Left cardiac atrium (tissue), 4 donors: ENCODE measurements at regions of chr17 and their contacts with region 1.

Region 1: DNA sequence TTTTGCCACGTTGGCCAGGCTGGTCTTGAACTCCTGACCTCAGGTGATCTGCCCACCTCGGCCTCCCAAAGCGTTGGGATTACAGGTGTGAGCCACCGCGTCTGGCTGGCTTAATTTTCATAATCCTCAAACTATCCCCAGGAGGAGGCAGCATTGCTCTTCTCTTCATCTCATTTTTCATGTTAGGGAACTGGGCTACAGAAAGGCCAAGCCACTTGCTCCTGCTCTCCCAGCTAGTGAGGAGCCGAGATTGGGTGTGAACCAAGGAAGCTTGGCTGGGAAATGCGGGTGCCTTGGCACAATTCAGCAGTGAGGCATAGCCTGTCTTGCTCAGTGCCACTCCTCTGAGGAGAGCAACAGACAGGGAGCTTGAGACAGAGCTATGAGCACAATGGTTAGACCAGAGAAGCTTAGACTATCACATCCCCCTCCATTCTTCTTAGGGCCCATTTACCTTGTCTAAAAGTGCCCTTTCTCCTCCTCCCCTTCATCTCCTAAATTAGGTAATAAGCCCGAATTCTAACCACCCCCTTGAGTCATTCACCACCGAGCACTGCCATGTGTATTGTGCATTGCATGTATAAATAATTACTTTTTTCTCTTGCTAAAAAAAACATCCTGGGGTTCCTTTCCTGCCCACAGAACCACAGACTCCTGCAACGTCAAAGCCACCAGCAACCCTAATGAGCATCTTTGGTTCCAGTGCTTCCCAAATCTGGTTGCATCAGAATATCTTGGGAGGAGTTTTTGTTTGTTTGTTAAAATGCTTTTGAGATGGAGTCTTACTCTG is 20.0 kb upstream of the KIF19 start:
- DNase-seq: no peak
- ATAC-seq: no peak

Region 2: DNA sequence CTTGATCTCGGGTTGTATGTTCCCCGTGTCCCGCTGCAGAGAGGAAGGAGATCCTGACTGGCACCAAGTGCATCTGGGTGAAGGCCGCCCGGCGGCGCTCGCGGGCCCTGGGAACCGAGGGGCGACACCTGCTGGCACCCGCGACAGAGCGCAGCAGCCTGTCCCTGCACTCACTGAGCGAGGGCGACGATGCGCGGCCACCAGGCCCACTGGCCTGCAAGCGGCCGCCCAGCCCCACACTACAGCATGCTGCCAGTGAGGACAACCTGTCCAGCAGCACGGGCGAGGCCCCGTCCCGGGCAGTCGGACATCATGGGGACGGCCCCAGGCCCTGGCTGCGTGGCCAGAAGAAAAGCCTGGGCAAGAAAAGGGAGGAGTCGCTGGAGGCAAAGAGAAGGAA is 48.1 kb after region 1 on chr17:
- intact Hi-C with region 1: loop called in 1 of 2 experiments (anchors 2 kb)
- DNase-seq: peak; percentile 53
- ATAC-seq: peak; percentile 21 to 39

Region 3: DNA sequence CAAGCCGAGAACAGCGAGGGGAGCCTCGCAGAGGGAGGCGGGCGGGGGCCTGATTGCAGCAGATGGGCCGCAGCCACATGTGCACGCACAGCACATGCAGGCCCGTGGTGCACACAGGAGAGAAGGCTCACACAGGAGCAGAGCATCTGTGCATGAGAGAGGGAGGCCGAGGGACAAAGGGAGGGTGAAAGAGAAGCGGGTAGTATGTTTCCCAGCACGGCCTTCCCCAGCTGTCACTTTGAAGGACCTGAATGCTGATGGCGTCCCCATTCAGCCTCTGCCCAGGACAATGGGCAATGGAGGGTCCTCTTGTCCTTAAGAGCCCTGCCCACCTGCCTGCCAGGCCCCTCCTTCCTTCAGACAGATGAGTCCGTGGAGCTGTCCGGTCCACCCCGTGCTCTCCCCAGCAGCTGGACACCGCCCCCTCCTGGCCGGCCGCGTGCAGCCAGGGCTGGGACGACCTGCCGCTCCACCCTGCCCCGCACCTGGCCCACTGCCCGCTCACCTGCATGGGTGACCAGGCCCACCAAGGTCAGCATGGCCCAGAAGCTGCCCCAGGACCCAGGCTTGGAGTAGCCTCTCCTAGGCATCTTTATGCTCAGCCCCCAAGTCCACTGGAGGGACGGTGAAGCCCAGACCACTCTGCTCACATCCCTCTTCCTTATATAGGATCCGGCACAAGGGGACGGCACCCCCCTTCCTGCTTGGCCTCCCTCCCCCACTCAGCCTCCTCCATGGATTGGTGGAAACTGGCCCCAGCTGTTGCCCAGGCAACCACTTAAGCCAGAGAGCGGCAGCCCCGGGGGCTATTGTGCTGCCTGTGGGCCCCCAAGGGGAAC is 55.4 kb after region 1 on chr17 and contains the start of gene BTBD17:
- intact Hi-C with region 1: loop called in 1 of 2 experiments (anchors 5 kb)
- DNase-seq: peak; percentile 66
- ATAC-seq: peak; percentile 78 to 88
- total RNA-seq, gene BTBD17: not detected

Region 4: GRCh38 chr17:74442670-74443515 is 136.8 kb after region 1 on chr17:
- intact Hi-C with region 1: no loop called
- DNase-seq: peak; percentile 91
- ATAC-seq: peak; percentile 75 to 77

Region 5: DNA sequence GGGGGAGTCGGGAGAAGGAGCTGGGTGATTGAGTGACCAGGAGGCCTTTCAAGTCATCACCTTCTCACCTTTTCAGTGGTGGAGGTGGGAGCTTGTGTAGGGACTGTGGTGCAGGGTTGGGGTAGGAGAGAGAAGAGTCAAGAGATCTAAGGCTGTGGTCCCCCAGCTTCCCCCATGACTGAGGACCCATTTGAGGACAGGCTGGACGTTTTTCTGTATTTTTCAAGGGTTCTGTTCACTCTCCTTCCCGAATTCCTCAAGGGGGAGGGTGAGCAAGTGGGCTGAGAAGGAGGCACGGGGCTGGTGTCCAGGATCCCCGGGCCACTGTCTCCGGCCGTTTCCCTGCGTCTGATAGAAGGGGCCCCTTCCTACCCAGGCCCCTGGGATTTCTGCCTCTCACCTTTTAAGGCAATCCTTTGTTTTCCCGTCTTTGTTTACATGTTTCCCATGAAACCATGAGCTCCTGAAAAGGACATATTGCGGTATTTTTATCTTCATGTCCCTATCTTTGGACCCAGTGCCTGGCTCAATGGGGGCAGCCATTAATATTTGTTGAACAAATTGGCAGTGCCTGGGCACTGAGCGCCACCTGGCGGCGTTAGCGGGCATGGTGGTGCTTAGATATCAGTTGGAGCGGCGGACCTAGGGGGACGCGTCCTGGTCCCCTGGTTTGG is 151.2 kb after region 1 on chr17:
- intact Hi-C with region 1: loop called in 1 of 2 experiments (anchors 10 kb)
- DNase-seq: peak; percentile 84
- ATAC-seq: peak in 1 of 2 donors; percentile 4